ENCODE measurements at regions of chr7 and their contacts with region 1.

Region 1: DNA sequence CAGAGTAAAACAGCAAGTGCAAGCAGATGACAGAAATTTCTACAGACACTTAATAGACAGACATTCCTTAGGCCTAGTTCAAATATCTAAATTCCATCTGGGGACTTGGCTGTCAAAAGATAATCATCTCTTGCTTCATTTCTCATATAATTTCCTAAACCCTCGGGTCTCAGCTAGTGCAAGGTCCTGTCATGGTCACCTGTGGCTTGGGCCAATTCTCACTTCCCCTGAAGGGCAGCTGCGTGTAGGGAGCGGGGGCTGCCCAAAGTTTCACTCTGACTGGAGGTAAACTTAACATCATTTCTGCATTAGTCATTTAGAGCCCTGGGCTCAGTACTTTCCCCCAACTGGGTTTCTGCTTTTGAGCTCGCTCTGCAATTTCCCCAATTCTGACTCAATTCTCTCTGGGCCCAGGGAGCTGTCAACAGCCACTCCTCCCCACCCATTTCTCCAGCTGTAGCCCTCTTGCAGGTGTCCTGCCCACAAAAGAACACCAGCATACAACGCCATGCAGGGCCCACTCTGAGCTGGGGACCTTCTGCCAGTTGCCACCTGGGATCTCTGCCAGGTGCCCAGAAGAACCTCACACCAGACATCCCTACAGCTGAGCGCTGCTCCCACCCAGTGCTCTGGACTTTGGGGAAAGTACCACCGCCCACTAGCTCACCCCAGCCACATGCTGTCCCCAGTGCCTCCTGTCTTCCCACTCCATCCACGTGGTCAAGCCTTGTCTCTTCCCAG is 38.0 kb downstream of the VOPP1 start:
- DNase-seq: peak; percentile 93
- H3K4me3 Mint-ChIP-seq: peak overlapping the region; percentile 67
- H3K27ac Mint-ChIP-seq: peak overlapping the region; percentile 97
- H3K4me1 Mint-ChIP-seq: peaks cover 97% of the 10 kb centered on the region
- H3K27me3 Mint-ChIP-seq: no peaks in the 10 kb centered on the region

Region 2: GRCh38 chr7:55132890-55133551 is 401.3 kb before region 1 on chr7:
- CTCF ChIA-PET with region 1: no interaction called
- intact Hi-C with region 1: loop called (anchors 5 kb)
- DNase-seq: peak; percentile 52
- H3K4me3 Mint-ChIP-seq: no peak overlapping the region
- H3K27ac Mint-ChIP-seq: peak overlapping the region; percentile 72
- H3K4me1 Mint-ChIP-seq: peaks cover 14% of the 10 kb centered on the region
- H3K27me3 Mint-ChIP-seq: peaks cover 5% of the 10 kb centered on the region

Region 3: GRCh38 chr7:55469271-55469681 is 65.1 kb before region 1 on chr7:
- CTCF ChIA-PET with region 1: interaction called, 3 read pairs
- intact Hi-C with region 1: loop called (anchors 1 kb)
- DNase-seq: peak; percentile 53
- H3K4me3 Mint-ChIP-seq: no peak overlapping the region
- H3K27ac Mint-ChIP-seq: peak overlapping the region; percentile 83
- H3K4me1 Mint-ChIP-seq: peaks cover 72% of the 10 kb centered on the region
- H3K27me3 Mint-ChIP-seq: no peaks in the 10 kb centered on the region

Region 4: GRCh38 chr7:55515569-55516279 is 18.6 kb before region 1 on chr7:
- CTCF ChIA-PET with region 1: interaction called, 11 read pairs
- intact Hi-C with region 1: loop called (anchors 1 kb)
- DNase-seq: peak; percentile 56
- H3K4me3 Mint-ChIP-seq: peak overlapping the region; percentile 36
- H3K27ac Mint-ChIP-seq: peak overlapping the region; percentile 90
- H3K4me1 Mint-ChIP-seq: peaks cover 77% of the 10 kb centered on the region
- H3K27me3 Mint-ChIP-seq: no peaks in the 10 kb centered on the region

Region 5: DNA sequence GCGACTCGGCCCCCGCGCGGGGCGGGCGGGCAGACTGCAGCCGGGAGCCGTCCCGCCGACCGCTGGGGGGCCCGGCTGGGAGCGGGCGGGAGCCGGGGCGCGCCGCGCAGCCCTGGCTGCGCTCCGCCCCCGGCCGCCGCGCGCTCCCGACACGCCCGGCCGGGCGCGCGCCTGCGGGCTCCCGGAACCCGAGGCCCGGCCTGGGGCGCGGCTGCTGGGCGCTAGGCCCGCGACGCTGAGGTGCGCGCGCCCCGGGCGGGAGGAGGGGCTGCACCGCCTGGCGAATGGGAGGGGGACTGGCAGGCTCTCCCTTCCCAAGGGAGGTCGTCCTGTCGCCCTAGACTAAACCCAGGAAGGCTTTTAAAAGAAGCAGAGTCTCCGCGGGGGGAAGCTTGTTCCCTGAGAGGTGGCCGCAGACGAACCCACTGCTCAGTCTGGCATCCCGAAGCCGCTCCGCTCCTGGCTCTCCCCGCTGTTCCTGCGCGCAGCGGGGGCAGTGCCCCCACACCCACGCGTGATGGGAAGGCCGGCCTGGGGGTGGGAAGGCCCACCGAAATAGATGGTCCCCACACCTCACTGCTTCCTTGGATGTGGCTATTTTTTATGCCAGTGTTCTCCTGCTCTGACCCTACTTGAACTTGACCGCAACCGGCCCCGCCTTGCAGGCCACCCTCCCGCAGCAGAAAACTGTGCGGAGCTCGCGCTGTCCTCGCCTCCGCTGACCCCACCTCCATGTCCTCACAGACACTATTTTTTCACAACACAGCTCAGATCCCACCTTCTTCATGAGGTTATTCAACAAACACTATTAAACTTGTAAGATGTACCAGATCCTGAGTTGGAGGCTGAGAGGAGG is 38.3 kb after region 1 on chr7 and contains the start of gene VOPP1:
- CTCF ChIA-PET with region 1: interaction called, 14 read pairs
- intact Hi-C with region 1: loop called (anchors 1 kb)
- DNase-seq: peak; percentile 53
- H3K4me3 Mint-ChIP-seq: peak within 1 kb of the TSS; percentile 91
- H3K27ac Mint-ChIP-seq: peak within 1 kb of the TSS; percentile 97
- H3K4me1 Mint-ChIP-seq: peaks cover 63% of the 10 kb centered on the region
- H3K27me3 Mint-ChIP-seq: no peaks in the 10 kb centered on the region
- total RNA-seq, gene VOPP1: 100 to 102 TPM

Region 6: GRCh38 chr7:56106108-56107073 is 572.0 kb after region 1 on chr7 and contains the start of gene CHCHD2:
- CTCF ChIA-PET with region 1: no interaction called
- intact Hi-C with region 1: loop called (anchors 2 kb)
- DNase-seq: peak; percentile 97
- H3K4me3 Mint-ChIP-seq: peak within 1 kb of the TSS; percentile 90
- H3K27ac Mint-ChIP-seq: peak within 1 kb of the TSS; percentile 98
- H3K4me1 Mint-ChIP-seq: peaks cover 31% of the 10 kb centered on the region
- H3K27me3 Mint-ChIP-seq: no peaks in the 10 kb centered on the region
- total RNA-seq, gene CHCHD2: 793 TPM

Measured in activated naive CD4-positive, alpha-beta T cell treated with anti-CD3 and anti-CD28 coated beads for 36 hours (primary cell).